ENCODE measurements at regions of chr12 and their contacts with region 1.

Region 1: DNA sequence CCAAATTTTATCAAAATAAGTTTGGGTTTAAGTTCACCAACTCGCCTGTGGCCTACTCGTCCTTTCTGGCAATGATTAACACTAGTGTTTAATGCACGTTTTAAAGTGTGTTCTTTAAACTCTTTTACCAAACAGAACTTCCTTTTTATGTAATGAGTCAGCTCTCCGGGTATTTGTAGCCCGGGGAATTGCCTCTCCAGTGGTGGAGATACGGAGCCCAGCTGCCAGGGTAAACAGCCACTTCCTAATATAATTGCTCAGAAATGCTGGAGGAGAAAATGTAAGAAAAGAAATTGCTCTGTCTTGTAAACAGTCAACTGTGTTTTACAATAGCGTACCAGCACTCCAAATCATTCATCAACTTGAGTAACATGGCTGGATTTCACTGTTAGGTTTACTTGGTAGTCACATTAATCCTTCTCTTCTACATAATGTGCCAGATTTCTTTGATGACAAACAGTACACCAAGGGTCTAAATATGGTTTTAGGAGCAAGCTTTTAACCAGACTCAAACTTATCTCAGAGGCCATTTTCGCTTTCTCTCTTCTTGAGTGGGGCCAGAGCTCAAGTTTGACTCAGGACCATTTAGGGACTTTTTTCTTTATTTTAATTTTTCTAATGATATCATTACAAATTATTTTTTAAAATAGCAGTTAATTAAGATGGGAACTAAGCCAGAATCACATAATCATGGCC is 101.2 kb upstream of the SLC38A2 start:
- DNase-seq: peak; percentile 94
- ATAC-seq: peak; percentile 81
- H3K4me3 ChIP-seq: peak overlapping the region; percentile 9; the same call in 1 of the 2 replicates
- H3K27ac ChIP-seq: peak overlapping the region; percentile 87
- H3K4me1 ChIP-seq: peaks cover 24% of the 10 kb centered on the region
- H3K27me3 ChIP-seq: no peaks in the 10 kb centered on the region
- CTCF ChIP-seq: no peak
- POLR2A ChIP-seq: no peak
- RAD21 ChIP-seq: peak; percentile 40

Region 2: DNA sequence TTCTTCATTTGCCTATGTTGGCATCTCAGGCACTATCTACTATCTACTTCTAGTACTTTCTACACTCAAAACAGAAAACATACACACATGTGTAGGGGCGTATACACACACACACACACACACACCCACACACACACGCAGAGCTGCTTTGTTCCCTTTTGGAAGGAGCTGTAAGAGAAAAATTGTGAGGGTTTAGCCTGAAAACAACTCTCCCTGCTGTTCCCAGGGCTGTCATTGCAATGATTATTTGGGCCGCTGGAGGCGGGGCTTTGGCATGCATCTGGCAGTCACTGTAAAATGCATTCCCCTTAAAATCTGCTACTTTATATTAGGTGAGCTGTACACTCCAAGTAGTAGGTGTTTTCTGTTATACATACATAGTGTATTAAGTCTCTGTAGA is 72.1 kb before region 1 on chr12:
- CTCF ChIA-PET with region 1: interaction called, 3 read pairs
- POLR2A ChIA-PET with region 1: no interaction called
- dilution Hi-C with region 1: no loop called
- in situ Hi-C with region 1: no loop called
- intact Hi-C with region 1: loop called (anchors 5 kb)
- DNase-seq: peak; percentile 58
- ATAC-seq: peak; percentile 52
- H3K4me3 ChIP-seq: no peak overlapping the region
- H3K27ac ChIP-seq: peak overlapping the region; percentile 90
- H3K4me1 ChIP-seq: peaks cover 20% of the 10 kb centered on the region
- H3K27me3 ChIP-seq: no peaks in the 10 kb centered on the region
- CTCF ChIP-seq: peak; percentile 30
- POLR2A ChIP-seq: no peak
- RAD21 ChIP-seq: peak; percentile 23; the same call in 1 of the 2 replicates

Region 3: GRCh38 chr12:46523863-46524770 is 50.3 kb after region 1 on chr12:
- CTCF ChIA-PET with region 1: no interaction called
- POLR2A ChIA-PET with region 1: interaction called, 3 read pairs
- dilution Hi-C with region 1: no loop called
- in situ Hi-C with region 1: no loop called
- intact Hi-C with region 1: loop called (anchors 2 kb)
- DNase-seq: peak; percentile 100
- ATAC-seq: peak; percentile 82
- H3K4me3 ChIP-seq: peak overlapping the region; percentile 47
- H3K27ac ChIP-seq: peak overlapping the region; percentile 94
- H3K4me1 ChIP-seq: peaks cover 25% of the 10 kb centered on the region
- H3K27me3 ChIP-seq: no peaks in the 10 kb centered on the region
- CTCF ChIP-seq: no peak
- POLR2A ChIP-seq: peak; percentile 83
- RAD21 ChIP-seq: peak; percentile 21; the same call in 1 of the 2 replicates

Region 4: DNA sequence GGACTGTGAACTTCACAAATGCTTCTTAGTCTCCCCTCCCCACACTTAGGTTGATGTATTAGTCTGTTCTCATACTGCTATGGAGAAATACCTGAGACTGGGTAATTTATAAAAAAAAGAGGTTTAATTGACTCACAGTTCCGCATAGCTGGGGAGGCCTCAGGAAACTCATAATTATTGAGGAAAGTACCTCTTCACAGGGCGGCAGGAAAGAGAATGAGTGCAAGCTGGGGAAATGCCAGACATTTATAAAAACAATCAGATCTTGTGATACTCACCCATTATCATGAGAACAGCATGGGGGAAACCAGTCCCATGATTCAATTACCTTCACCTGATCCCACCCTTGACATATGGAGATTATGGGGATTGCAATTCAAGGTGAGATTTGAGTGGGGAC is 173.3 kb after region 1 on chr12:
- CTCF ChIA-PET with region 1: no interaction called
- POLR2A ChIA-PET with region 1: no interaction called
- dilution Hi-C with region 1: no loop called
- in situ Hi-C with region 1: no loop called
- intact Hi-C with region 1: no loop called
- DNase-seq: no peak
- ATAC-seq: no peak
- H3K4me3 ChIP-seq: no peak overlapping the region
- H3K27ac ChIP-seq: no peak overlapping the region
- H3K4me1 ChIP-seq: 0 out of 2 replicates have a peak, but pooled peaks cover 1% of the 10 kb centered on the region
- H3K27me3 ChIP-seq: no peaks in the 10 kb centered on the region
- CTCF ChIP-seq: no peak
- POLR2A ChIP-seq: no peak
- RAD21 ChIP-seq: no peak

Region 5: GRCh38 chr12:46661110-46661845 is 187.5 kb after region 1 on chr12:
- CTCF ChIA-PET with region 1: interaction called, 3 read pairs
- POLR2A ChIA-PET with region 1: no interaction called
- dilution Hi-C with region 1: no loop called
- in situ Hi-C with region 1: no loop called
- intact Hi-C with region 1: loop called (anchors 1 kb)
- DNase-seq: peak; percentile 95
- ATAC-seq: peak; percentile 76
- H3K4me3 ChIP-seq: peak overlapping the region; percentile 14; the same call in 1 of the 2 replicates
- H3K27ac ChIP-seq: peak overlapping the region; percentile 93
- H3K4me1 ChIP-seq: peaks cover 29% of the 10 kb centered on the region
- H3K27me3 ChIP-seq: no peaks in the 10 kb centered on the region
- CTCF ChIP-seq: peak; percentile 87
- POLR2A ChIP-seq: peak; percentile 32; the same call in 1 of the 2 replicates
- RAD21 ChIP-seq: peak; percentile 84